ENCODE measurements at regions of chr19 and their contacts with region 1.

Region 1: GRCh38 chr19:49877020-49877878 is at the starts of genes AKT1S1 and TBC1D17:
- DNase-seq: peak; percentile 99
- H3K4me3 Mint-ChIP-seq: no peak within 1 kb of the TSS
- H3K27ac Mint-ChIP-seq: no peak within 1 kb of the TSS
- H3K4me1 Mint-ChIP-seq: peaks cover 31% of the 10 kb centered on the region
- H3K27me3 Mint-ChIP-seq: no peaks in the 10 kb centered on the region
- total RNA-seq, gene AKT1S1: 17.5 to 18.9 TPM
- total RNA-seq, gene TBC1D17: 33.2 to 33.8 TPM

Region 2: DNA sequence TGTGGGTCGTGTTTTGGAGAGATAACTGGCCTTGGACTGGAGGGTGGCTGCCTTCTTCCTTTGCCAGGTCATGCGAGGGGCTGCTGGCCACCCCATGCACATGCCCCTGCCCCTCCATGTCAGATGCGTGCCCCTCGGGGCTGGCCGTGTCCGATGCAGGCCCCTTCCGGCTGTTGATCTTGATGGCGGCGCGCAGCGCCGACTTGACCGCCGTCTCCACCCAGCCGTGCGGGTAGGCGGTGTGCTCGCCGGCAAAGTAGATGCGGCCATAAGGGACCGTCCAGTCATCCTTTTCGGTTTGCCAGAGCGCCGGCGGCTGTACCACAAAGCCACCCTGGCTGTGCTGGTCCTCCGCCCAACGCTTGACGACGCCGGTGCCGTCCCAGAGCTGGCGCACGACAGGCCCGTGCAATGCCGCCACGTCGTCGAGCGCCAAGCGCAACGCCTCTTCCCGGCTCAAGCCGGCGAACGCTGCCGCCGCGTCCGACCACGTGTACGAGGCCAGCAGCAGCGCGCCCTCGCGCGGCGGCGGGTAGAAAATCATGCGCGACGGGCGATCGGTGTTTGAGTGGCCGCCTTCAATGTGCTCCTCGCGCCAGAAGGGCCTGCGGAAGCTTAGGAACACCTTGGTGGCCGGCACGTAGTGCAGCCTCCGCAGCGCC is 12.6 kb after region 1 on chr19:
- CTCF ChIA-PET with region 1: interaction called, 11 read pairs
- POLR2A ChIA-PET with region 1: no interaction called
- DNase-seq: peak; percentile 78
- H3K4me3 Mint-ChIP-seq: peak overlapping the region; percentile 66
- H3K27ac Mint-ChIP-seq: peak overlapping the region; percentile 41
- H3K4me1 Mint-ChIP-seq: peaks cover 13% of the 10 kb centered on the region
- H3K27me3 Mint-ChIP-seq: peaks cover 3% of the 10 kb centered on the region